ENCODE measurements at regions of chr18 and their contacts with region 1.

Region 1: DNA sequence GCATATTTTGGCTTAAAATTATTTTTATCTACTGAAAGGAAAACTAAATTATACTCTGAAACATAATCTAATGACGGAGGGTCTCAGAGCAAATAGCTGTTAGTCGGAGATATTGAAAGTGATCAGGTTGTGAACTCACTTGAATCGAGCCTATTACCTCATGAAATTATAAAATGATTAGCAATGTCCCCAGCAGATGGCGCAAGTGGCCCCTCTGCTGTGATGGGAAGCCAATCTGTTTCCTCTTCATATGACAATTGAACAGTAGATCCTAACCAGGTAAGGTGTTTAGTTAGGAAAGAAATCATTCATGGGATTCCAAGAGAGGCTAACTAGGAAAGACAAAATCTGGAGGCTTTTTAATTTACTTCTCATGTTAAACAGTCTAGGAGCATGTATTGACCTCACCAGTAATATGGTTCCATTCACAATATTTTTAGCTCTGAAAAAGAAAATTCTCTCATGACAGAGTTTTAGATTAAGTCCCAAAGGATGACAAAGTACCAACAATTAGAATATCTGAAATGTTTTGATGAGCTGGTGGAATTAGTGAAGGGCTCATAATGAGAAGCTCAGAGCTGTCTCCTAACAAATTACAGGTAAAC is 29.9 kb upstream of the MPPE1 start:
- DNase-seq: peak; percentile 69 to 80 (median 74)
- H3K4me3 ChIP-seq: peak overlapping the region in 1 of 7 experiments; percentile 16
- H3K27ac ChIP-seq: no peak overlapping the region
- H3K4me1 ChIP-seq: peaks cover 0 to 2% (median 0%) of the 10 kb centered on the region in 4 experiments
- H3K27me3 ChIP-seq: no peaks in the 10 kb centered on the region

Region 2: GRCh38 chr18:11688989-11689668 is 248.8 kb before region 1 on chr18 and contains the start of gene GNAL:
- CTCF ChIA-PET with region 1: no interaction called
- POLR2A ChIA-PET with region 1: no interaction called
- DNase-seq: peak; percentile 82 to 89 (median 88)
- H3K4me3 ChIP-seq: peak within 1 kb of the TSS; percentile 26 to 69 (median 56)
- H3K27ac ChIP-seq: no peak within 1 kb of the TSS
- H3K4me1 ChIP-seq: peaks cover 0 to 17% (median 15%) of the 10 kb centered on the region in 4 experiments
- H3K27me3 ChIP-seq: peaks cover 6 to 48% (median 16%) of the 10 kb centered on the region in 5 experiments

Region 3: GRCh38 chr18:11726556-11726955 is 211.4 kb before region 1 on chr18:
- CTCF ChIA-PET with region 1: no interaction called
- POLR2A ChIA-PET with region 1: no interaction called
- DNase-seq: no peak
- H3K4me3 ChIP-seq: no peak overlapping the region
- H3K27ac ChIP-seq: no peak overlapping the region
- H3K4me1 ChIP-seq: no peaks in the 10 kb centered on the region
- H3K27me3 ChIP-seq: peaks cover 0 to 7% (median 5%) of the 10 kb centered on the region in 5 experiments

Region 4: DNA sequence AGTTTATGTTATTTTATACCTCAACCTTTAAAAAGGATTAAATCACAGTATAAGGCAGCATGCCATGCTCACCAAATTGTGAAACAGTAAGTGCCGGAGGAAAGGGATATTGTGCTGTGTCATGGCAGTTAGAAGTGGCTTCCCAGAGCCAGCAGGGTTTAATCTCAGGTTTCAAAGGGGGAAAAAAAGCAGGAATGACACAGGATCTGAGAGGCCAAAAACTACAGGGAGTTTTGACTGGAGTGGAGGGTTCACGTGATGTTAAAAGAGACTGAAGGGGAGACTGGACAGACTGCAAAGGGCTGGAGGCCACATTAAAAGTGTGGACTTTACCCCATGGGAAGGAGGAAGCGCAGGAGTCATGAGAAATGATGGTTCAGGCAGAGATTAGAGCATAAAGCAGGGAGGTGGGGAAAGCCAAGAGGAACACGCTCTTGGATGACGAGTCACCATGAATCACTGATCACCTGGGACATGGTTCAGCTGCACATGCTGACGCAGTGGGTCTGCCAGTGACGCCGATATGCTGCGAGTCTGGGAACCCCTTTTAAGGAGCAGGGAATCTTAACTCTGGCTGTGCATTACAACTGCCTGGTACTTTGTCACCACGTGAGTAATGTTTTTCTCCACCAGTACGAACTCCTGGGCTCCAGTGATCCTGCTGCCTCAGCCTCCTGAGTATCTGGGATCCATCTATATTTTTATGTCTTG is 80.6 kb before region 1 on chr18:
- CTCF ChIA-PET with region 1: no interaction called
- POLR2A ChIA-PET with region 1: no interaction called
- DNase-seq: peak in 2 of 3 donors; percentile 46 to 52
- H3K4me3 ChIP-seq: no peak overlapping the region
- H3K27ac ChIP-seq: no peak overlapping the region
- H3K4me1 ChIP-seq: peaks cover 10 to 22% (median 16%) of the 10 kb centered on the region in 4 experiments
- H3K27me3 ChIP-seq: peaks cover 0 to 28% (median 6%) of the 10 kb centered on the region in 5 experiments

Region 5: DNA sequence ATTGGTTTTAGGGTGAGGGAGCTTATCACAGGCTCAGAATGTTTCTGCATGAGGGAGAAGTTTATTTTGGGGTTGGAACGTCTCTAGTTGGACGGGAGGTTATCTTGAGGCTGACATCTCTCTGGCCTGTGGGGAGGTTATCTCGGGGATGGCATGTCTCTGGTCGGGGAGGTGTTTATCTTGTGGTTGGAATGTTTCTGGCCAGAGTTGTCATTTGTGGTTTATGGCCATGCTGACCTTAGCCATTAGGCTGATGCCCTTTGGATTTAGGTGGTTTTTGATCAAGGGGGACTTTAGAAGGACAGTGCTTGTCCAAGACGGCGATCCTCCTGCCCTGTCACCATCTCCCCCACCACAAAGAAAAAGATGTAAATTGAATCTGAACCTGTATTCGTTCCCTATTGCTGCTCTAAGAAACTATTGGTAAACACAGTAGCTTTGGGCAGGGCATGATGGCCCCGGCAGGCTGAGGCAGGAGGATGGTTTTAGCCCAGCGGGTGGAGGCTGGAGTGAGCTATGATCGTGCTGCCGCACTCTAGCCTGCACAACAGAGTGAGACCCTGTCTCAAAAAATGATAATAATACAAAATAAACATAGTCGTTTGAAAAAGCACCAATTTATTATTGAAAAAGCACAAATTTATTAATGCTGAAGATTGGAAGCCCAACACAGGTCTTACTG is 12.0 kb before region 1 on chr18:
- CTCF ChIA-PET with region 1: interaction called, 25 read pairs
- POLR2A ChIA-PET with region 1: no interaction called
- DNase-seq: no peak
- H3K4me3 ChIP-seq: no peak overlapping the region
- H3K27ac ChIP-seq: no peak overlapping the region
- H3K4me1 ChIP-seq: peaks cover 0 to 2% (median 0%) of the 10 kb centered on the region in 4 experiments
- H3K27me3 ChIP-seq: no peaks in the 10 kb centered on the region

Region 6: GRCh38 chr18:11955239-11956029 is 17.5 kb after region 1 on chr18:
- CTCF ChIA-PET with region 1: interaction called, 14 read pairs
- POLR2A ChIA-PET with region 1: no interaction called
- DNase-seq: peak; percentile 39 to 78 (median 74)
- H3K4me3 ChIP-seq: no peak overlapping the region
- H3K27ac ChIP-seq: no peak overlapping the region
- H3K4me1 ChIP-seq: peaks cover 3 to 7% (median 5%) of the 10 kb centered on the region in 4 experiments
- H3K27me3 ChIP-seq: no peaks in the 10 kb centered on the region

Region 7: GRCh38 chr18:11980555-11981382 is 42.8 kb after region 1 on chr18:
- CTCF ChIA-PET with region 1: interaction called, 667 read pairs
- POLR2A ChIA-PET with region 1: no interaction called
- DNase-seq: peak; percentile 97 to 99 (median 99)
- H3K4me3 ChIP-seq: peak overlapping the region; percentile 53 to 84 (median 68)
- H3K27ac ChIP-seq: peak overlapping the region in 1 of 2 experiments; percentile 68
- H3K4me1 ChIP-seq: peaks cover 10 to 46% (median 34%) of the 10 kb centered on the region in 4 experiments
- H3K27me3 ChIP-seq: no peaks in the 10 kb centered on the region

Region 8: DNA sequence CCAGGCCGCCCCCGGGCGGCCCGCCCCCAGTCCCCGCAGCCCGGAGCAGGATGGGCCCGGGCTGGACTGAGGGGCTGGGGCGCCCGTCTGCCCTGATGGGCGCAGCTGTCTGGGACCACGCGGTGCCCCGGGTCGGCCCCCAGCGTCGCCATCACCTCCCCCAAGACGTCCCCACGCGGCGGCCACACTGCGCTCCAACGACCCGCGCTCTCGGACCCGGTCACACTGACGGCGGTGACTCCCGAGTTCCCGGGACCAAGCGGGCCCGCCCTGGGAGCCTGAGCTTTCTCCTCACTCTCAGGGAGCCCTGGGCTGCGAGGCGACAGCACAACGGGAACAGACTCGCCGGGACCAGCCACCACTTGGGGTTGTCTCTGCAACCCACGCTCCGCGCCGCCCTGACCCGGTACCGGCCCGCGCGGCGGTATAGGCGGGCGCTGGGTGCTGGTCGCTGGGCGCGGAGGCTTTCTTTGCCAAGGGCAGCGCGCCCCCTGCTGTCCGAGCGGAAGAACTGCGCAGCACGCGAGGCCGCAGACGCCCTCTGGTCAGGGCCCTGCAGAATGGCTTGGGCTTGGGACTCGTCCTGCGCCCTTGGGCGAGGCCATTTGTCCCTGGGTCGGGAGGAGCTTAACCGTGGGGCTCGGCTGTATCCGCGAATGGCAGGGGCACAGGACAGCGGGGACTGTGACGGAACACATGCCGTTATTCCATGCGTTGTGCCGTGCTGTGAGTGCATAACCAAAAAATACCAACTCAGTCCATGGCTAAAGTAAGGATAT is 100.9 kb after region 1 on chr18:
- CTCF ChIA-PET with region 1: interaction called, 20 read pairs
- POLR2A ChIA-PET with region 1: no interaction called
- DNase-seq: peak; percentile 70 to 76 (median 72)
- H3K4me3 ChIP-seq: peak overlapping the region; percentile 30 to 73 (median 67)
- H3K27ac ChIP-seq: no peak overlapping the region
- H3K4me1 ChIP-seq: peaks cover 0 to 21% (median 17%) of the 10 kb centered on the region in 4 experiments
- H3K27me3 ChIP-seq: peaks cover 0 to 7% (median 4%) of the 10 kb centered on the region in 5 experiments